ENCODE measurements at regions of chr5 and their contacts with region 1.

Region 1: DNA sequence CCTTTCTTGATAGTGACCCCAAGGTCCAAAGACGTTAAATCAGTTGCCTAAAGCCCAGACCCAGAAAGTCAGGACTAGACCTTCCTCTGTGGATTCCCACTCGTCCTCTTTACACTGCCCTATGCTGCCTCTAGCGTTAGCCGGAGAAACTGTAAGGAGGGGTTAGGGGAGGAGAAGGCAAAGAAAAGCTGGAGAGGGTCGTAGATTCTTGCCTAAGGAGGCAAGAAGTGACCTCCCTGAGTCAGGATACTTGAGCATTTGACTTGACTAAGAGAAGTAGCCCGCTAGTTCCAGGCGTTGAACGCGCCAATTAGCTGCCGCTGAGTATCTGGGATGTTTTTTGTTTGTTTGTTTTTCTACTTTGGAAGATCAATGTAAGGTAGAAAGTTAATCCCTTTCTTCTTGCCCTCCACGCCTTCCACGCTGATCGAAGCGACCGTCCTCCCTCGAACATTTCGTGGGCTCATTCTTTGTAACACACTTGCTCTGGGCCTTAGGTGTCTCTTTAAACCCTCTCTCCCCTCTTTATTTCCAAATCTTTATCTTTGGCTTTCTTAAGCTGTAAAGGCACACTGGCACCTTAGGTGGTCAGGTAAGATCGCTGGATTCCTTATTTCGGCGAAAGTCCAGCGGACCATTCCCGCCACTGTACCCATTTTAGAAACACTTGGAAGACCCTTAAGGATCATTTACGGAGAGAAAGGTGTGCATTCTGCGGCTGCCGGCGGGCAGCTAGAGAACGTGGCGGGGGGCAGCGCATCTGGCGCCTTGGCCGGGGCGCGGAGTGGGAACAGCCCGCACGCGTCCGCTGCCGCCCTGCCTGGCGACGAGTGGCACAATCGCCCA is 5.1 kb upstream of the RGMB start:
- DNase-seq: no peak
- ATAC-seq: peak; percentile 37
- H3K4me3 ChIP-seq: peak overlapping the region; percentile 79
- H3K27ac ChIP-seq: no peak overlapping the region
- H3K4me1 ChIP-seq: peaks cover 12% of the 10 kb centered on the region
- H3K27me3 ChIP-seq: peaks cover 3 to 9% of the 10 kb centered on the region in 2 experiments; a peak in 3 of 4 replicates
- CTCF ChIP-seq: peak; percentile 82 to 98 (median 93)
- EP300 ChIP-seq: no peak
- POLR2A ChIP-seq: no peak
- RAD21 ChIP-seq: peak; percentile 89

Region 2: DNA sequence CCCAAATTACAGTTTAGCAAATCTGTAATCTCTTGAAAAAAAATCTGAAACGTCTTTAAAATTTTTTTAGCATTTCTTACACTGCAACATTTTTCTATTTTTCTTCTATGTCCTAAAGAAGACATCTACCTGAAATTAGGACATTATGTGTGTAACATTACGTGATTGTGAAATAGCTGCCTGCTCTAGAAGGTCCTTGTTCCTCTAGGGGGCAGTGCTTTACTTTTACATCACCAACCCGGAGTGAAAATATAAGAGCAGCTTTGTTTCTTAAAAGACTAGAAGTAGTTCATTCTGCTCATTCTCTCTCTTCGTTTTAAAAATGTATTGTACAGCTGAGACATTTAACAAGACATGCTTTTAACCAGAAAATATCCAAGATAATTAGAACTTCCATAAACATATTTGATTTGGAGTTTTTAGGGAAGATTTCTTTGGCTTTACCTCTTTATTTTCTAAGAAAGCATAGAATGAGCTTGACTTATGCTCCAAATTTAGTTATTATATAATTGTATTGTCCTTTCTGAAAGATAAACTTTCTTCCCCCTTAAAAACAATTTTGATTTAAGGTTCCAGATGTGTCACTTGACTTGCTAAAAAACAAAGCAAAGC is 1537.3 kb before region 1 on chr5:
- CTCF ChIA-PET with region 1: interaction called, 21 read pairs
- POLR2A ChIA-PET with region 1: no interaction called
- RAD21 ChIA-PET with region 1: interaction called, 12 read pairs
- SMC1A ChIA-PET with region 1: interaction called, 3 read pairs
- in situ Hi-C with region 1: no loop called
- intact Hi-C with region 1: no loop called
- DNase-seq: peak; percentile 20
- ATAC-seq: peak; percentile 94
- H3K4me3 ChIP-seq: no peak overlapping the region
- H3K27ac ChIP-seq: no peak overlapping the region
- H3K4me1 ChIP-seq: no peaks in the 10 kb centered on the region
- H3K27me3 ChIP-seq: no peaks in the 10 kb centered on the region
- CTCF ChIP-seq: peak; percentile 61 to 76 (median 73)
- EP300 ChIP-seq: no peak
- POLR2A ChIP-seq: no peak
- RAD21 ChIP-seq: peak; percentile 83

Region 3: GRCh38 chr5:98700730-98701129 is 67.7 kb before region 1 on chr5:
- CTCF ChIA-PET with region 1: no interaction called
- POLR2A ChIA-PET with region 1: no interaction called
- RAD21 ChIA-PET with region 1: no interaction called
- SMC1A ChIA-PET with region 1: no interaction called
- in situ Hi-C with region 1: no loop called
- intact Hi-C with region 1: no loop called
- DNase-seq: no peak
- ATAC-seq: no peak
- H3K4me3 ChIP-seq: no peak overlapping the region
- H3K27ac ChIP-seq: no peak overlapping the region
- H3K4me1 ChIP-seq: no peaks in the 10 kb centered on the region
- H3K27me3 ChIP-seq: no peaks in the 10 kb centered on the region
- CTCF ChIP-seq: no peak
- EP300 ChIP-seq: no peak
- POLR2A ChIP-seq: no peak
- RAD21 ChIP-seq: no peak

Region 4: GRCh38 chr5:98750693-98751092 is 17.7 kb before region 1 on chr5:
- CTCF ChIA-PET with region 1: interaction called, 58 read pairs
- POLR2A ChIA-PET with region 1: no interaction called
- RAD21 ChIA-PET with region 1: no interaction called
- SMC1A ChIA-PET with region 1: no interaction called
- in situ Hi-C with region 1: no loop called
- intact Hi-C with region 1: no loop called
- DNase-seq: no peak
- ATAC-seq: peak; percentile 73
- H3K4me3 ChIP-seq: no peak overlapping the region
- H3K27ac ChIP-seq: no peak overlapping the region
- H3K4me1 ChIP-seq: no peaks in the 10 kb centered on the region
- H3K27me3 ChIP-seq: no peaks in the 10 kb centered on the region
- CTCF ChIP-seq: peak; percentile 28 to 51 (median 47); a peak in 4 of 6 replicates
- EP300 ChIP-seq: no peak
- POLR2A ChIP-seq: no peak
- RAD21 ChIP-seq: peak; percentile 31

Region 5: GRCh38 chr5:98780390-98780789 is 12.0 kb after region 1 on chr5:
- CTCF ChIA-PET with region 1: interaction called, 27 read pairs
- POLR2A ChIA-PET with region 1: interaction called, 3 read pairs
- RAD21 ChIA-PET with region 1: interaction called, 9 read pairs
- SMC1A ChIA-PET with region 1: interaction called, 11 read pairs
- in situ Hi-C with region 1: no loop called
- intact Hi-C with region 1: no loop called
- DNase-seq: no peak
- ATAC-seq: peak; percentile 30
- H3K4me3 ChIP-seq: peak overlapping the region; percentile 21; the same call in 1 of the 2 replicates
- H3K27ac ChIP-seq: no peak overlapping the region
- H3K4me1 ChIP-seq: peaks cover 6% of the 10 kb centered on the region
- H3K27me3 ChIP-seq: no peaks in the 10 kb centered on the region
- CTCF ChIP-seq: no peak
- EP300 ChIP-seq: no peak
- POLR2A ChIP-seq: no peak
- RAD21 ChIP-seq: no peak

Region 6: GRCh38 chr5:98786191-98786853 is 17.9 kb after region 1 on chr5:
- CTCF ChIA-PET with region 1: interaction called, 26 read pairs
- POLR2A ChIA-PET with region 1: interaction called, 3 read pairs
- RAD21 ChIA-PET with region 1: no interaction called
- SMC1A ChIA-PET with region 1: interaction called, 11 read pairs
- in situ Hi-C with region 1: no loop called
- intact Hi-C with region 1: no loop called
- DNase-seq: no peak
- ATAC-seq: no peak
- H3K4me3 ChIP-seq: no peak overlapping the region
- H3K27ac ChIP-seq: no peak overlapping the region
- H3K4me1 ChIP-seq: no peaks in the 10 kb centered on the region
- H3K27me3 ChIP-seq: no peaks in the 10 kb centered on the region
- CTCF ChIP-seq: no peak
- EP300 ChIP-seq: no peak
- POLR2A ChIP-seq: no peak
- RAD21 ChIP-seq: no peak

Region 7: GRCh38 chr5:98796197-98796972 is 28.0 kb after region 1 on chr5:
- CTCF ChIA-PET with region 1: interaction called, 104 read pairs
- POLR2A ChIA-PET with region 1: no interaction called
- RAD21 ChIA-PET with region 1: interaction called, 14 read pairs
- SMC1A ChIA-PET with region 1: interaction called, 24 read pairs
- in situ Hi-C with region 1: no loop called
- intact Hi-C with region 1: loop called (anchors 1 kb)
- DNase-seq: no peak
- ATAC-seq: peak; percentile 90
- H3K4me3 ChIP-seq: no peak overlapping the region
- H3K27ac ChIP-seq: no peak overlapping the region
- H3K4me1 ChIP-seq: no peaks in the 10 kb centered on the region
- H3K27me3 ChIP-seq: no peaks in the 10 kb centered on the region
- CTCF ChIP-seq: peak; percentile 70 to 80 (median 75)
- EP300 ChIP-seq: no peak
- POLR2A ChIP-seq: no peak
- RAD21 ChIP-seq: peak; percentile 89

Region 8: GRCh38 chr5:98827161-98827560 is 58.8 kb after region 1 on chr5:
- CTCF ChIA-PET with region 1: interaction called, 8 read pairs
- POLR2A ChIA-PET with region 1: no interaction called
- RAD21 ChIA-PET with region 1: interaction called, 3 read pairs
- SMC1A ChIA-PET with region 1: interaction called, 3 read pairs
- in situ Hi-C with region 1: no loop called
- intact Hi-C with region 1: loop called (anchors 2 kb)
- DNase-seq: no peak
- ATAC-seq: peak; percentile 83
- H3K4me3 ChIP-seq: no peak overlapping the region
- H3K27ac ChIP-seq: no peak overlapping the region
- H3K4me1 ChIP-seq: no peaks in the 10 kb centered on the region
- H3K27me3 ChIP-seq: no peaks in the 10 kb centered on the region
- CTCF ChIP-seq: peak; percentile 46 to 60 (median 47); a peak in 5 of 6 replicates
- EP300 ChIP-seq: no peak
- POLR2A ChIP-seq: no peak
- RAD21 ChIP-seq: peak; percentile 88

Measured in GM12878 (cell line).